ENCODE measurements at regions of chr14 and their contacts with region 1.

Region 1: DNA sequence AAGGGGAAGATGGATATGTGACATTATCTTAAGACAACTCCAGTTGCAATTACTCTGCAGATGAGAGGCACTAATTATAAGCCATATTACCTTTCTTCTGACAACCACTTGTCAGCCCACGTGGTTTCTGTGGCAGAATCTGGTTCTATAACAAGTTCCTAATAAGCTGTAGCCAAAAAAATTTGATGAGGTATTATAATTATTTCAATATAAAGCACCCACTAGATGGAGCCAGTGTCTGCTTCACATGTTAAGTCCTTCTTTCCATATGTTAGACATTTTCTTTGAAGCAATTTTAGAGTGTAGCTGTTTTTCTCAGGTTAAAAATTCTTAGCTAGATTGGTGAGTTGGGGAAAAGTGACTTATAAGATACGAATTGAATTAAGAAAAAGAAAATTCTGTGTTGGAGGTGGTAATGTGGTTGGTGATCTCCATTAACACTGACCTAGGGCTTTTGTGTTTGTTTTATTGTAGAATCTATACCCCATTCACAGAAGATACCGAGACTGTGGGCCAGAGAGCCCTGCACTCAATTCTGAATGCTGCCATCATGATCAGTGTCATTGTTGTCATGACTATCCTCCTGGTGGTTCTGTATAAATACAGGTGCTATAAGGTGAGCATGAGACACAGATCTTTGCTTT is 36.9 kb downstream of the PSEN1 start:
- DNase-seq: no peak
- H3K4me3 ChIP-seq: no peak overlapping the region
- H3K27me3 ChIP-seq: no peaks in the 10 kb centered on the region
- CTCF ChIP-seq: peak; percentile 55

Region 2: DNA sequence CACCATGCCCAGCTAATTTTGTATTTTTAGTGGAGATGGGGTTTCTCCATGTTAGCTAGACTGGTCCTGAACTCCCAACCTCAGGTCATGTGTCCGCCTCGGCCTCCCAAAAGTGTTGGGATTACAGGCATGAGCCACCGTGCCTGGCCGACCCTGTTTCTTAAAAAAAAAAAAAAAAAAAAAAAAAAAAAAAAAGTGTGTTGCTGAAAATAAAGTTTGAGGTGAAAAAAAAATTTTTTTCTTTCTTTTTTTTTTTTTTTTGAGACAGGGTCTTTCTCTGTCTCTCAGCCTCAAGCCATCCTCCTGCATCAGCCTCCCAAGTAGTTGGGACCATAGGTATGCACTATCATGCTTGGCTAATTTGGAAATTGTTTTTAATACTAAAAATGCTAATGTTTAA is 103.6 kb before region 1 on chr14:
- CTCF ChIA-PET with region 1: no interaction called
- POLR2A ChIA-PET with region 1: no interaction called
- DNase-seq: no peak
- H3K4me3 ChIP-seq: no peak overlapping the region
- H3K27me3 ChIP-seq: no peaks in the 10 kb centered on the region
- CTCF ChIP-seq: no peak

Region 3: DNA sequence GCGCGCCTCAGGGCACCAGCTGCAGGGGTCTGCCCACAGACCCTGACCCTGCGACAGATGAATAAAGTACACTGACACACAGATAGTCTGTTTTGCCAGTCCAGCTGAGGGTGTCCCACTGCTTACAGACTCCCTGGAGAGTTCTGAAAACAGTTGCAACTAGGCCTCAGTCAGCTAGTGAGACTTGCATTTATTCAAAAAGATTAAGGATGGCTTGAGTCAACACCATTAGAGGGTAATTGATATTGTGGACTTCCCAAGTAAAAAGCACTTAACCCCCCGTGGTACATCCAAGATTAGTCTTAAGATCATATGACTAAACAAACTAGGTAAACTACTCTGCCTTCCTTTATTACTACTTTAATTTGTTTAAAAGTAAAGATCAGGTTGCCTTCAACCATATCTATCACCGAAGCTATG is 48.0 kb before region 1 on chr14:
- CTCF ChIA-PET with region 1: no interaction called
- POLR2A ChIA-PET with region 1: no interaction called
- DNase-seq: no peak
- H3K4me3 ChIP-seq: no peak overlapping the region
- H3K27me3 ChIP-seq: no peaks in the 10 kb centered on the region
- CTCF ChIP-seq: no peak

Region 4: GRCh38 chr14:73153272-73153671 is 19.9 kb before region 1 on chr14:
- CTCF ChIA-PET with region 1: interaction called, 15 read pairs
- POLR2A ChIA-PET with region 1: no interaction called
- DNase-seq: no peak
- H3K4me3 ChIP-seq: no peak overlapping the region
- H3K27me3 ChIP-seq: no peaks in the 10 kb centered on the region
- CTCF ChIP-seq: no peak

Region 5: GRCh38 chr14:73295198-73295796 is 122.1 kb after region 1 on chr14:
- CTCF ChIA-PET with region 1: interaction called, 10 read pairs
- POLR2A ChIA-PET with region 1: no interaction called
- DNase-seq: no peak
- H3K4me3 ChIP-seq: no peak overlapping the region
- H3K27me3 ChIP-seq: no peaks in the 10 kb centered on the region
- CTCF ChIP-seq: peak; percentile 64

Region 6: GRCh38 chr14:73463411-73463810 is 290.2 kb after region 1 on chr14:
- CTCF ChIA-PET with region 1: interaction called, 17 read pairs
- POLR2A ChIA-PET with region 1: no interaction called
- DNase-seq: peak; percentile 87
- H3K4me3 ChIP-seq: no peak overlapping the region
- H3K27me3 ChIP-seq: no peaks in the 10 kb centered on the region
- CTCF ChIP-seq: no peak

Region 7: DNA sequence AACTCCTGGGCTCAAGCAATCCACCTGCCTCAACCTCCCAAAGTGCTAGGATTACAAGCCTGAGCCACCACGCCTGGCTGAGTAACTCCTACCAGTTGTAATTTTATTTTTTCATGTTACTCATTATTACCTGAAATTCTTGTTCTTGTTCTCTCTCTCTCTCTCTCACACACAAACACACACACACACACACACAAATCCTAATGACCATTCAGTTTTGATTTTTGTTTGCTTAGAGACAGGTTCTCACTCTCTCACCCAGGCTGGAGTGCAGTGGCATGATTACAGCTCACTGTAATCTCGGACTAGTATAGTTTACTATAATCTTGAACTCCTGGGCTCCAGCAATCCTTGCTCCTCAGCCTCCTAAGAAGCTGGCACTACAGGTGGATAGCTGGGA is 501.8 kb after region 1 on chr14:
- CTCF ChIA-PET with region 1: no interaction called
- POLR2A ChIA-PET with region 1: no interaction called
- DNase-seq: no peak
- H3K4me3 ChIP-seq: no peak overlapping the region
- H3K27me3 ChIP-seq: no peaks in the 10 kb centered on the region
- CTCF ChIP-seq: no peak